IMR-90 (cell line): ENCODE measurements at regions of chr10 and their contacts with region 1.

Region 1: DNA sequence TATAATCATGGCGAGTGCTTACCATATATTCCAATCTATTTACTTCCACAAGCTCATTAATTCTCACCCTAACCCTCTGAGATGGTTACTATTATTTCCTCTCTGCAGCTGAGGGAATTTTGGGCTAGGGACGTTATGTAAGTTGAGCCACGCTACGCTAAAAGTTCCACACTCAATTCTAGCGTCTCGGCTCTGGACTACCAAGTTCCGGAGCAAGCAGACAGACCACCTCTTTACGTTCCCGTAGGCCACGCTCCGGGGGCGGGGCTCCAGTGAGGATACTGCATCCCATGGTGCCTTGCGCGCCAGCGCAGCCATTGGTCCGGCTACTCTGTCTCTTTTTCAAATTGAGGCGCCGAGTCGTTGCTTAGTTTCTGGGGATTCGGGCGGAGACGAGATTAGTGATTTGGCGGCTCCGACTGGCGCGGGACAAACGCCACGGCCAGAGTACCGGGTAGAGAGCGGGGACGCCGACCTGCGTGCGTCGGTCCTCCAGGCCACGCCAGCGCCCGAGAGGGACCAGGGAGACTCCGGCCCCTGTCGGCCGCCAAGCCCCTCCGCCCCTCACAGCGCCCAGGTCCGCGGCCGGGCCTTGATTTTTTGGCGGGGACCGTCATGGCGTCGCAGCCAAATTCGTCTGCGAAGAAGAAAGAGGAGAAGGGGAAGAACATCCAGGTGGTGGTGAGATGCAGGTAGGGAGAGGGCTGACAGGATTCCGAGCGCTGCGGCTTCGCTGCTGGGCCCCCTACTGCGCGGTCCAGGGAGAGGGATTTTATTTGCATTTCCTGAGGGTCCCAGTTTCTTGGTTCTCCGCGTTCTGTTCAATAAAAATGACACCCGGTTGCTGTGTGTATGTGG is at the start of gene KIF11:
- DNase-seq: peak; percentile 96
- ATAC-seq: peak; percentile 93
- H3K4me3 ChIP-seq: peak within 1 kb of the TSS; percentile 78
- H3K27ac ChIP-seq: peak within 1 kb of the TSS; percentile 86
- H3K4me1 ChIP-seq: peaks cover 7% of the 10 kb centered on the region
- H3K27me3 ChIP-seq: no peaks in the 10 kb centered on the region
- CTCF ChIP-seq: no peak
- POLR2A ChIP-seq: peak; percentile 47
- RAD21 ChIP-seq: no peak
- total RNA-seq, gene KIF11: 18.3 and 35.0 TPM in 2 replicates

Region 2: GRCh38 chr10:92644921-92645320 is 51.9 kb after region 1 on chr10:
- CTCF ChIA-PET with region 1: interaction called, 3 read pairs
- POLR2A ChIA-PET with region 1: no interaction called
- dilution Hi-C with region 1: no loop called
- in situ Hi-C with region 1: no loop called
- intact Hi-C with region 1: loop called (anchors 2 kb)
- DNase-seq: no peak
- ATAC-seq: no peak
- H3K4me3 ChIP-seq: no peak overlapping the region
- H3K27ac ChIP-seq: no peak overlapping the region
- H3K4me1 ChIP-seq: no peaks in the 10 kb centered on the region
- H3K27me3 ChIP-seq: no peaks in the 10 kb centered on the region
- CTCF ChIP-seq: no peak
- POLR2A ChIP-seq: no peak
- RAD21 ChIP-seq: no peak

Region 3: GRCh38 chr10:92695679-92696605 is 103.0 kb after region 1 on chr10:
- CTCF ChIA-PET with region 1: no interaction called
- POLR2A ChIA-PET with region 1: no interaction called
- dilution Hi-C with region 1: no loop called
- in situ Hi-C with region 1: no loop called
- intact Hi-C with region 1: loop called (anchors 2 kb)
- DNase-seq: peak; percentile 70
- ATAC-seq: peak; percentile 87
- H3K4me3 ChIP-seq: peak overlapping the region; percentile 47
- H3K27ac ChIP-seq: peak overlapping the region; percentile 82
- H3K4me1 ChIP-seq: peaks cover 32% of the 10 kb centered on the region
- H3K27me3 ChIP-seq: no peaks in the 10 kb centered on the region
- CTCF ChIP-seq: no peak
- POLR2A ChIP-seq: peak; percentile 50; the same call in 1 of the 2 replicates
- RAD21 ChIP-seq: no peak

Region 4: DNA sequence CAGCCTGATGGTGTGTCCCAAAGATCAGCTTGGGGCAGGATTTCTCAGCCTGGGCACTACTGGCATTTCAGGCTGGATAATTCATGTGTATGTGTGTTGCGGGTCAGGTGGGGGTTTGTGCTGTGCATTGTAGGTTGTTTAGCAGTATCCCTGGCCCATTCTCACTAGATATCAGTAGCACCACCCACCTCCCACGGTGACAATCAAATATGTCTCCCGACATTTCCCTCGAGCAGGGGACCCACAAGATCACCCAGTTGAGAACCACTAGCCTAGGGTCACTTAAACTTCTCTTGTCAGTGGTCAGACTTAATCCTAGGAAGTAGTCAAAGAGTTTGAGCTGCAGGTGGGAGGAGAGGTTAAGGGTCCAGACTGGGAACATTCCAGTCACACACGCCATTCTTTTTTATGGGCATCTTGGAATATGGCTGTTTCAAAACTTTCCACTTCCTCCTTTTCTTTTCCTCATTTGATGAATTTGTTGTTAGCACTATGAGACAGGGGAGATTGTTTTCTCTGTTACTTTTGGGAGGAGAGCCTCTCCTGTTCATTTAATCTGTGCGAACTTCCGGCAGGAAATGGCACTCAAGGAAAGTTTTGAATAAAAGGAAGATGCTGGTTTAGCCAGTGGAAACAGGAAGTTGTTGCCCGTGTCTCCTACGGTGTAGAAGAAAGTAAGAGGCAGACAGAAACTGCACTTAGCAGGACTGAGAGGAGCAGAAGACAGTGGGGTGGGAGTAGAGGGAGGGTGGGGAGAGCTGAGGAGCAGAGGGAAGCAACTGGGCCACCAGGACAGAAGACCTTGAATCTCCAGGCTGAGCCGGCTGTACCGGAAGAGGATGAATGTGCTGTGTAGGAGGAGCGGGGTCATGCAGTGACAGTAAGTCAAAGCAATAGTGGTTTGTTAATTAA is 237.7 kb after region 1 on chr10:
- CTCF ChIA-PET with region 1: no interaction called
- POLR2A ChIA-PET with region 1: no interaction called
- dilution Hi-C with region 1: no loop called
- in situ Hi-C with region 1: no loop called
- intact Hi-C with region 1: loop called (anchors 5 kb)
- DNase-seq: no peak
- ATAC-seq: no peak
- H3K4me3 ChIP-seq: no peak overlapping the region
- H3K27ac ChIP-seq: 0 out of 2 replicates have a peak overlapping the region, but pooled peaks have one; percentile 3
- H3K4me1 ChIP-seq: peaks cover 17% of the 10 kb centered on the region
- H3K27me3 ChIP-seq: no peaks in the 10 kb centered on the region
- CTCF ChIP-seq: no peak
- POLR2A ChIP-seq: no peak
- RAD21 ChIP-seq: no peak